AG04449 (cell line): ENCODE measurements at regions of chr7 and their contacts with region 1.

Region 1: DNA sequence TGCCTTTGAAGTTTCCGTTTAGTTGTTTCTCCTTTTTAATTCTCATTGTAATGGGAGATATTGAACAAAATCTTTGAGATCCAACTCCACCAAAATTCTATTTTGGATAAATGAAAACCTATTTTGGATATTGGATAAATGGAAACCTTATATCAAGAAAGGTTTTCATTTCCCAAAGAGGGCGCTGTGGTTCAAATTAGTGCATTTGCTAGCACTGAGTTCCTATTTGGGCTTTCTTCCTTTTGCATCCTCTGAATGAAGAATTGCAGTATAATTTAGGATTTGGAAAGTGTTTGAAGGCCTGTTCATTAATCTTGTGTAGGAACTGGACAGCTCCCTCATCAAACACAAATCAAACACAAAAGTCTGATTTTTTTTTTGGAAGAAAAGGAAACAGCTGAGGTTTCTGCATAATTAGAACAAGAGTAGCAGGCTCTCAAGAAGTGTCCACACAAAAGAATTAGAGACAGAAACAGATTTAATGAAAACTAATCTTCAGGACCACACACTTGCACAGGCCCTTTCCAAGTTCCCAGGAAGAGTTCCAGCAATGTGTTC is 80.8 kb upstream of the KLF14 start:
- DNase-seq: no peak
- H3K4me3 ChIP-seq: no peak overlapping the region
- CTCF ChIP-seq: peak; percentile 22

Region 2: GRCh38 chr7:130278860-130279259 is 536.0 kb before region 1 on chr7:
- CTCF ChIA-PET with region 1: no interaction called
- POLR2A ChIA-PET with region 1: no interaction called
- DNase-seq: peak; percentile 89
- H3K4me3 ChIP-seq: no peak overlapping the region
- CTCF ChIP-seq: no peak

Region 3: DNA sequence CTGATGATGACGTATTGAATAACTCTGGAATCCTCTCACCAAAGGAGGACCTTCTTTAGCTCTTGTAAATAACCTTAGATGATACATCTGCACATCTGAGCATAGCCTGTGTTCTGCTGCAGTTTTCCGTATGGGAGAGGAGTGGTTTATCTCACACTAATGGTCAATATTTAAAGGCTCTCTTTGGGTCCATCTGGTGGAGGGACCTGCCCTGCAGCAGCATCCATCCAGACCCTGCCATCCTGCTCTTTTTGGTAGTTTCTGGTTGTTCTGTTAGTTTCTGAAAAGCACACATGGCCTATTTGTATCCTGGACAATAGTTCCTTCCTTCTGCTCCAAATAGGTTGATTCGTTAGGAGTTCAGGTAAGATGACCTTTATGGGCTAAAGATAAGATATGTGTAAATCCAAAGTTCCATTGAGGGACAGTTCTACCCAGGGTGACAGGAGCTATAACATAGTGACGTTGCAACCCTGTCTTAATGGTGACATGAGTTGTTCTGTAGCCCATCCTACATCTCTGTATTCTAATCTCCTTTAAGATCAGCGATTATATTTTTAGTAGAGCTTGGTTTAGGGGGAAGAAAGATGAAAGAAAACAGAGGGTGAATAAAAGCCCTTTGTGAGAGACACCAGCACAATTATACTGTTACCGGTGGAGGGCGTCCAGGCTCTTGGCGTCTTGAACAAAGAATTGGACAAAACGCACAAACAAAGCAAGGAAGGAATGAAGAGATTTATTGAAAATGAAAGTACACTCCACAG is 20.8 kb before region 1 on chr7:
- CTCF ChIA-PET with region 1: interaction called, 14 read pairs
- POLR2A ChIA-PET with region 1: no interaction called
- DNase-seq: no peak
- H3K4me3 ChIP-seq: no peak overlapping the region
- CTCF ChIP-seq: peak; percentile 10

Region 4: GRCh38 chr7:130875265-130875741 is 60.4 kb after region 1 on chr7:
- CTCF ChIA-PET with region 1: no interaction called
- POLR2A ChIA-PET with region 1: no interaction called
- DNase-seq: no peak
- H3K4me3 ChIP-seq: no peak overlapping the region
- CTCF ChIP-seq: peak; percentile 85